ENCODE measurements at regions of chr20 and their contacts with region 1.

Region 1: DNA sequence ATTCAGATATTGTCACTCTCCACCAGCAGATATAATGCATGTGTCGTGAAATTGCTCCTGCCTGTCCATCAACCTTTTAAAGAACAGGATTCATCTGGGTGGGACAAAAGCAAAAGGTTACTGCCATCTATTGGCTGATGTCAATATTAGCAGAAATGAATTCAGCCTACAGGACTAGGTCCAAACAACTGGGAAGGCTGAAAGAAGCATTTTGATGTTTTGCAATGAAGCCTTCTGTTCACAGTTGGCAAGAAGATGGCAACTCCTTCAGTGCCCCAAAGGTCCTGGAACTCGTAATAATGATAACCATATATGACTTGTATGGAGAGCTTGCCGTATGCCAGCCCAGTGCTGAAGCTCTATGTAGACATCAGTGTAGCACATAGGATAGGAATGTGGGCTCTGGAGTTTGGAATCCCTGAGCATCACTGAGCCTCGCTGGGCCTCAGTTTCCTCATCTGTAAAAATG is 7.5 kb downstream of the BCAS1 start:
- DNase-seq: no peak
- ATAC-seq: no peak
- H3K4me3 Mint-ChIP-seq: no peak overlapping the region
- H3K27ac Mint-ChIP-seq: no peak overlapping the region
- H3K4me1 Mint-ChIP-seq: peaks cover 38% of the 10 kb centered on the region
- H3K27me3 Mint-ChIP-seq: no peaks in the 10 kb centered on the region
- CTCF ChIP-seq: no peak

Region 2: DNA sequence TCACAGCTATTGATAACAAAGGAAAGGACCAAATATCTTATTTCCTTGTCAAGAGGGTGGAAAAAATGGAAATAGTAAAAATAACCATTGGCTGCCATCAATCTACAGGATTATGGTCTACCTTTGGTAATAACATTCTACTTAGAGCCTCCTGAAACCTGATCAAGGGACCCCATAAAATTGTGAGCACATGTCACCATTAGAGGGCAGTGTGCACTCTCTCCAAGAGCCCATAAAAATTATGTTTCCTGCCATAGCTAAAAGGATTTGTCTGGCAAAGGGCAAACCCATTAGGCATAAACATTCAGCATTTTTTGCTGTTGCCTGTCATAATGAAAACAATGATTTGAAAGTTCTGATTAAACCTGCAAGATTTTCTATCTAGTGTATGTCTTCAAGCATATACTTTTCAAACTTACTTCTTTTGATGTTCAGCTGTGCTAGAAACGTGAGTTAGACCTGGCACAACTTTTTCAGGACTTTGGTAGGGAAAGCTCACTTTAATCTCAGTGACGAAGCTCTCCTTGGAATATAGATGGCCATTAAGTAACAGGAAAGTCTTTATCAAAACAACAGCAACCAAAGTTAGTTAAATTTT is 1750.6 kb before region 1 on chr20:
- CTCF ChIA-PET with region 1: interaction called, 6 read pairs
- POLR2A ChIA-PET with region 1: no interaction called
- intact Hi-C with region 1: loop called (anchors 1 kb)
- DNase-seq: no peak
- ATAC-seq: no peak
- H3K4me3 Mint-ChIP-seq: no peak overlapping the region
- H3K27ac Mint-ChIP-seq: no peak overlapping the region
- H3K4me1 Mint-ChIP-seq: no peaks in the 10 kb centered on the region
- H3K27me3 Mint-ChIP-seq: peaks cover 25% of the 10 kb centered on the region
- CTCF ChIP-seq: no peak

Region 3: GRCh38 chr20:53157443-53158408 is 905.1 kb before region 1 on chr20:
- CTCF ChIA-PET with region 1: no interaction called
- POLR2A ChIA-PET with region 1: no interaction called
- intact Hi-C with region 1: loop called (anchors 2 kb)
- DNase-seq: peak; percentile 24
- ATAC-seq: peak; percentile 53
- H3K4me3 Mint-ChIP-seq: peak overlapping the region; percentile 36
- H3K27ac Mint-ChIP-seq: peak overlapping the region; percentile 86
- H3K4me1 Mint-ChIP-seq: peaks cover 43% of the 10 kb centered on the region
- H3K27me3 Mint-ChIP-seq: no peaks in the 10 kb centered on the region
- CTCF ChIP-seq: no peak

Region 4: DNA sequence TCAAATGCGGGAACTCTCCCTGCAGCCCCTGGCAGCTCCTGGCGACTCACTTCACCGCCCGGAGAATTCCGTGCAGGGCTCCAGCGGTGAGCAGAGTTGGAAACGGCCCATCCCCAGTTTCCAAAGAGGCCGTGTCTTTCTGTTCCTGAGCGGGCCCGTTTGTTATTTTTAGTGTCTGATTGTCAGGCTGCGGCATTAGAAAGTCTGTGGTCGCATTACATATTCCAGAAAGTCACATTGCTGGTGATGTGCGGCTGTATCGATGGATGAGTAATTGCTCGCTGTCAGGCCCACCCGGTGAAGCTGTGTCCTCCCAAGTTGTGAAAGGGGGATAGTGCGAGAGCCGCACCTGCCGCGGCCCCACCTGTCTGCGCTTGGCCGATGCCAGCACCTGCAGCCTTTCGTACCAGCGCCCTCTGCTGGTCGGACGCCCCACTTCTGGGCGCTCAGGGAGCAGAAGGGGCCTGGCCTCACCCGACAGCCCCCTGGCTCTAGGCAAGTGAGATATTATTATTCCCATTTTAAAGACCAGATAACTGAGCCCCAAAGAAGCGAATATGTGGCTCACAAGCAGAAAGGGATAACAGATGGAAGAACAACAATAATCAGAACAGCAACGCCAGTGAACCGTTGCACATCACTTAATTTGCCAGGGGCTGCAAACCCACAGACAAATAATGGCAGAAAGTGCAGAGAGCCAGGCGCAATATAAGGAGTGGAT is 845.8 kb before region 1 on chr20:
- CTCF ChIA-PET with region 1: interaction called, 3 read pairs
- POLR2A ChIA-PET with region 1: no interaction called
- intact Hi-C with region 1: loop called (anchors 1 kb)
- DNase-seq: peak; percentile 67
- ATAC-seq: peak; percentile 78
- H3K4me3 Mint-ChIP-seq: peak overlapping the region; percentile 41
- H3K27ac Mint-ChIP-seq: no peak overlapping the region
- H3K4me1 Mint-ChIP-seq: peaks cover 12% of the 10 kb centered on the region
- H3K27me3 Mint-ChIP-seq: peaks cover 12% of the 10 kb centered on the region
- CTCF ChIP-seq: peak; percentile 61

Region 5: DNA sequence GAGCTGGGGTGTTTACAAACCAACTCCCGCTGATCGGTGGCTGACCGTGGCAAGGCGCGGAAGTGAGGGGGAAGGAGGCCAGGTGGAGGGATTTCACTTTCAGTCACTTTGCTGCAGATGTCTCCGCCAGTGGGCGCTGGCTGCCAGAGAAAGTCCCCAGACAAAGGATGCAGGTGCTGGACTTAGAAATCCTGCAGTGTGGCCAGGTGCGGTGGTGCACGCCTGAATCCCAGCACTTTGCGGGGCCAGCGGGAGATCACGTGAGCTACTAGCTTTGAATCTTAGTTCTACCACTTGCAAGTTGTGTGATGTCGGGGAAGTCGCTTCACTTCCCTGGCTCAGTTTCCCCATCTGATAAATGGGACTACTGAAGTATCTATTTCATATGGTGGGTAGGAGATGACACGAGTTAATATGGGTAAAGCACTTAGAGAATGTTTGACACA is 649.6 kb before region 1 on chr20:
- CTCF ChIA-PET with region 1: interaction called, 11 read pairs
- POLR2A ChIA-PET with region 1: no interaction called
- intact Hi-C with region 1: loop called (anchors 1 kb)
- DNase-seq: peak; percentile 43
- ATAC-seq: peak; percentile 70
- H3K4me3 Mint-ChIP-seq: peak overlapping the region; percentile 58
- H3K27ac Mint-ChIP-seq: no peak overlapping the region
- H3K4me1 Mint-ChIP-seq: peaks cover 6% of the 10 kb centered on the region
- H3K27me3 Mint-ChIP-seq: peaks cover 2% of the 10 kb centered on the region
- CTCF ChIP-seq: no peak

Region 6: GRCh38 chr20:53578492-53579222 is 484.2 kb before region 1 on chr20:
- CTCF ChIA-PET with region 1: interaction called, 3 read pairs
- POLR2A ChIA-PET with region 1: no interaction called
- intact Hi-C with region 1: loop called (anchors 2 kb)
- DNase-seq: no peak
- ATAC-seq: peak; percentile 58
- H3K4me3 Mint-ChIP-seq: peak overlapping the region; percentile 32
- H3K27ac Mint-ChIP-seq: peak overlapping the region; percentile 88
- H3K4me1 Mint-ChIP-seq: peaks cover 56% of the 10 kb centered on the region
- H3K27me3 Mint-ChIP-seq: no peaks in the 10 kb centered on the region
- CTCF ChIP-seq: no peak

Region 7: GRCh38 chr20:54025251-54025771 is 37.5 kb before region 1 on chr20:
- CTCF ChIA-PET with region 1: no interaction called
- POLR2A ChIA-PET with region 1: interaction called, 15 read pairs
- intact Hi-C with region 1: no loop called
- DNase-seq: no peak
- ATAC-seq: no peak
- H3K4me3 Mint-ChIP-seq: no peak overlapping the region
- H3K27ac Mint-ChIP-seq: no peak overlapping the region
- H3K4me1 Mint-ChIP-seq: peaks cover 3% of the 10 kb centered on the region
- H3K27me3 Mint-ChIP-seq: no peaks in the 10 kb centered on the region
- CTCF ChIP-seq: no peak

Measured in activated B cell treated with CpG ODN at 0.5 μM for 24 hours (primary cell).